ENCODE measurements at regions of chr11 and their contacts with region 1.

Region 1: DNA sequence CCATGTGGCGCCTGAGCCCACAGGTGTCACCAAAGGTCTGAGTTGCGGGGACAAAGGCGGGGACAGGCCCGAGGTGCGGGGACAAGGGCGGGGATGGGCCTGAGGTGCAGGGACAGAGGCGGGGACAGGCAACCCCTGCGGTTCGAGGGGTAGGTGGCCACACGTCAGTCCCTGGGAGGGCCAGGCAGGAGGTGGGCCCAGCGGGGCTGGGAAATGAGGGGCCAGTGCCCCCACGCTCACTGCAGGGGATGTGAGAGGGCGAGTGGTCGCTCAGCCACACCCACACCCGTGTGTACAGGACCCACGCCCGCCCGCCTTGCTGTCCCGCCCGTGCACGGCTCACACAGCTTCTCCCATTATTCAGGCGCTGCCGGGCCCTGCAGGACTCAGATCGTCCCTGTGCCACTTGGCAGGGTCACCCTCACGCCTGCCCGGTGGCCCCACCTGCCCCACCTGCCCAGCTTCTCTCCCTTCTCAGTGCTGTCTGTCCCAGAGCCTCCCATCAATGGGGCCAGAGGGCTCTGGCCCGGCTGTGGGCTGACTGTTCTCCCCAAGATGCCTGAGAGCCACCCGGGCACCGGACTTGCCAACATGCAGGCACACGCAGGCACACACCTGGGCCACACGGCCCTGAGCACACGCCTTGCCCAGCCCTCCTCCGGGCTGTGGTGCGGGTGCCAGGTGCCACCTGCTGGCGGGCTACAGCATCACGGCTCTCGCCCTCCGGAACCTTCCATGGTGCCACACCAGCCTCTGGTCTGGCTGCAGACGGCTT is 14.2 kb upstream of the MUC6 start:
- DNase-seq: peak; percentile 77 to 82 (median 80)
- ATAC-seq: peak; percentile 94 to 99 (median 98)
- H3K4me3 ChIP-seq: no peak overlapping the region
- H3K27ac ChIP-seq: no peak overlapping the region
- H3K4me1 ChIP-seq: no peaks in the 10 kb centered on the region
- H3K27me3 ChIP-seq: no peaks in the 10 kb centered on the region
- CTCF ChIP-seq: peak; percentile 91 to 97 (median 94)
- POLR2A ChIP-seq: no peak

Region 2: GRCh38 chr11:848380-848931 is 202.3 kb before region 1 on chr11:
- intact Hi-C with region 1: loop called (anchors 5 to 10 kb)
- DNase-seq: no peak
- ATAC-seq: peak; percentile 5 to 52 (median 20)
- H3K4me3 ChIP-seq: no peak overlapping the region
- H3K27ac ChIP-seq: no peak overlapping the region
- H3K4me1 ChIP-seq: peaks cover 0 to 21% (median 0%) of the 10 kb centered on the region in 4 donors
- H3K27me3 ChIP-seq: peaks cover 0 to 5% of the 10 kb centered on the region in 2 donors
- CTCF ChIP-seq: peak; percentile 74 to 90 (median 86)
- POLR2A ChIP-seq: no peak

Region 3: DNA sequence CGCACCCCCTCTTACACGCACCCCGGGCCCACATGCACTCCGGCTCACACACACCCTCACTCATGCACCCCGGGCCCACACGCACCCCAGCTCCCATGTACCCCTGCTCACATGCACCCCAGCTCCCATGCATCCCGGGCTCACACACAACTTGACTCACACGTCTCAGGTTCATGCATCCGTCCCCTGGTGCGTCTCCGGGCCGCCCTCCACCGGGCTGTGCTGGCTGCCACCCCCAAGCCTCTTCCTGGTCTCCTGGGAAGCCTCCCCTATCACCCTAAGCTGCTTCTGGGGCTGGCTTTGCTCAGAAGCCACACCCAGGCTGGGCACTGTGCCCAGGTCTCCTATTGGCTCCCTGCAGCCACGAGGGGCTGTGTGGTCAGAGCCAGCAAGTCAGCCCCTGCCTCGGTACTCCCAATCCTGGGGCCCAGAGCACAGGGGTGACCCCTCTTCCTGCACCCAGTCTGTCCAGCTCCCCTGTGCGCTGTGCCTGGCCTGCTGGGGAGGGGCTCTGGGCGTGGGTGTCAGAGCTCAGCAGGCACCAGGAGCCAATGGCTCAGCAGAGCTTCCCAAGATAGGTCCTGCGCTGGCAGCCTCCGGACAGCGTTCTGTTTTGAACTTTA is 191.1 kb before region 1 on chr11:
- intact Hi-C with region 1: loop called in 1 of 2 experiments (anchors 10 kb)
- DNase-seq: peak in 1 of 3 donors; percentile 62
- ATAC-seq: peak; percentile 20 to 42 (median 30)
- H3K4me3 ChIP-seq: no peak overlapping the region
- H3K27ac ChIP-seq: no peak overlapping the region
- H3K4me1 ChIP-seq: no peaks in the 10 kb centered on the region
- H3K27me3 ChIP-seq: no peaks in the 10 kb centered on the region
- CTCF ChIP-seq: no peak
- POLR2A ChIP-seq: no peak

Region 4: GRCh38 chr11:898143-898511 is 152.6 kb before region 1 on chr11:
- intact Hi-C with region 1: loop called in 1 of 2 experiments (anchors 10 kb)
- DNase-seq: no peak
- ATAC-seq: peak in 2 of 4 donors; percentile 11 to 14
- H3K4me3 ChIP-seq: no peak overlapping the region
- H3K27ac ChIP-seq: no peak overlapping the region
- H3K4me1 ChIP-seq: no peaks in the 10 kb centered on the region
- H3K27me3 ChIP-seq: no peaks in the 10 kb centered on the region
- CTCF ChIP-seq: no peak
- POLR2A ChIP-seq: no peak

Region 5: DNA sequence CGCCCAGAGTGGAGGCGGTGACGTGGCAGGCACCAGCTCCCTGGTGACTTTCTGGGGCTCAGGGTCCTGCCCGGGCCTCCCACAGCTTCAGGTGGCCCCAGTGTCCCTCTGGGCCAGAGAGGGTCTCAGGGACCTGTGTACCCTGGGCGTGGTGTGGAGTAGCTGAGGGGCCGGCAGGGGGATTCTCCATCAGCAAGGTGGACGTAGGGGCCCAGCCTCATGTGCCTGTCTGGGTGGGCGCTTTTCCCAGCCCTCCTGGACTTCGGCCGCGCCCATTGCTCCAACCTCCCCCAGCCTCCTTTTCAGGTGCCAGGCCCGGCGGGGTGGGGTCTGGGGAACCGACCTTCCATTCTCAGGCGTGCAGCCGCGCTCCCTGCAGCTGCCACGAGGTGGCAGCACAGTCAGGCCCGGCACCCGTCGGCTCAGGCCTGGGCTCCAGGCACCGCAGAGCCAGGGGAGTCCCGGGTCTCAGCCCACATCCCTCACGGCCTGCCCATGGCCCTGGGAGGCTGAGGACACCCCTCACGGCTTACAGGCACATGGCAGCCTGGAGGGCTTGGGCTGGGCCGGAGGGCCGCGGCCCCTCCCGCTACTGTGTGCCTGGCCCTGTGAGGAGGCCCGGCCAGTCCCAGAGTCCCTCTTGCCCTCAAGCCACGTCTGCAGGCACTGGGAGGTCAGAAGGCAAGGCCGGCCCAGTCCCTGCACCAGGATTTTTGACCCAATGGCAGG is 152.2 kb after region 1 on chr11:
- intact Hi-C with region 1: no loop called
- DNase-seq: peak; percentile 63 to 74 (median 65)
- ATAC-seq: peak; percentile 82 to 93 (median 90)
- H3K4me3 ChIP-seq: no peak overlapping the region
- H3K27ac ChIP-seq: no peak overlapping the region
- H3K4me1 ChIP-seq: no peaks in the 10 kb centered on the region
- H3K27me3 ChIP-seq: no peaks in the 10 kb centered on the region
- CTCF ChIP-seq: peak; percentile 80 to 96 (median 90)
- POLR2A ChIP-seq: no peak

Region 6: GRCh38 chr11:1226986-1227545 is 176.3 kb after region 1 on chr11:
- intact Hi-C with region 1: no loop called
- DNase-seq: peak; percentile 19 to 49 (median 44)
- ATAC-seq: no peak
- H3K4me3 ChIP-seq: no peak overlapping the region
- H3K27ac ChIP-seq: no peak overlapping the region
- H3K4me1 ChIP-seq: no peaks in the 10 kb centered on the region
- H3K27me3 ChIP-seq: no peaks in the 10 kb centered on the region
- CTCF ChIP-seq: no peak
- POLR2A ChIP-seq: no peak